ENCODE measurements at regions of chr20 and their contacts with region 1.

Region 1: DNA sequence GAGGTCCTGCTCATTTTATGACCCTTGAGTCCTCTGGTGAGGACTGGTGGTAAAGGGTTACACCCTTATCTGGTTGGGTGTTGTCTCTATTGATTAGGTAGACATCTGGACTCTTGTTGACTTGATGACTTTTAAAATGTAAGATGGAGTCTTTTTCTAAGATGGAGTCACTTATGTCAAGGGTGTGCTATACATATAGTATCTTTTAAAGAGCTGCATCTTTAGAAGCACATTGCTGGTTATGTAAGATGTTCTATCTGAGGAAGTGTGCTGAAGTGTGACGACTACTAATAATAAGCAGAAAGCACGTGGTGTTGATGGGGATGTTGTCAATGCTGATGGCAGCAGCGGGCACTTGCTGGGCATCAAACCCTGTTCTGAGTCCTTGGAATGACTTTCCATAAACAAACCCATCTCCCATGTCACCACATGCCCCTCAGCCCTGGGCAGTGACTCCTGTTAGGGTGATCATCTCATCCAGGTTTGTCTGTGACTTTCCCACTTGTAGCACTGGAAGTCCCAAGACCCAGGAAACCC is 229.6 kb downstream of the EYA2 start:
- DNase-seq: peak; percentile 33 to 87
- H3K4me3 ChIP-seq: no peak overlapping the region
- CTCF ChIP-seq: no peak
- POLR2A ChIP-seq: no peak

Region 2: GRCh38 chr20:47055699-47056369 is 68.4 kb before region 1 on chr20:
- intact Hi-C with region 1: no loop called
- DNase-seq: peak in 1 of 2 donors; percentile 78
- H3K4me3 ChIP-seq: no peak overlapping the region
- CTCF ChIP-seq: no peak
- POLR2A ChIP-seq: no peak

Region 3: DNA sequence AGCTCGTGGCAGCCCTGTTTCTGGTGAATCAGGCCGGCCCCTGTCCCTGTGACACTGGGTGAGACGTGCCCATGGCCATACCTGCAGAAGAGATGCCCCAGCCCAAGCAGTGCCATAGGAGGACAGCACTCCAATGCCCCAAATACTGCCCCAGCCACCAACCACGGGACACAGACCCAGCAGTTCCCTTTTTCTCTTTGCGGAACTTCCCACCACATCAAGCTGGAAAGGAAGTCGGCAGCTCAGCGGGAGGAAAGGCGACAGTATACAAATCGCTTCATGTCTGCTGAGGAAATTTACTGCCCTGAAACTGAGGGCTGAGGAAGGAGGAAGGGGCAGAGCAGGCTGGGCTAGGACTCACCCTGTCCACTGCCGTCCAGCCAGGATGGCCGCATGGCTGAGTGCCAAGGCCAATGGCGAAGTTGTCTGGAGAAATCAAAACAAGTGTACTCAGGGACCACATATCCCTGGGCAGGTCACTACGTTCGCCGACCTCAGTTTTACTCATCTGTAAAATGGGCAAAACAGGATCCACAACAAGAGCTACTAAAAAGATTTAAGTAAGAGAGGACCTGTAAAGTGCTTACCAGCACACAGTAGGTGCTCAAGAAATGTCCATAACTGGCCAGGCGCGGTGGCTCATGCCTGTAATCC is 1648.2 kb after region 1 on chr20:
- intact Hi-C with region 1: loop called (anchors 5 kb)
- DNase-seq: peak in 1 of 2 donors; percentile 51
- H3K4me3 ChIP-seq: no peak overlapping the region
- CTCF ChIP-seq: no peak
- POLR2A ChIP-seq: no peak